HepG2 (cell line): ENCODE measurements at regions of chr19 and their contacts with region 1.

Region 1: GRCh38 chr19:30669329-30670010 is 297.3 kb downstream of the ZNF536 start:
- DNase-seq: peak; percentile 30
- ATAC-seq: peak; percentile 63
- H3K4me3 ChIP-seq: no peak overlapping the region
- H3K27ac ChIP-seq: no peak overlapping the region
- H3K4me1 ChIP-seq: peaks cover 15% of the 10 kb centered on the region
- H3K27me3 ChIP-seq: peaks cover 0 to 3% of the 10 kb centered on the region in 2 experiments; a peak in 1 of 5 replicates
- CTCF ChIP-seq: peak; percentile 80
- EP300 ChIP-seq: no peak
- POLR2A ChIP-seq: no peak
- RAD21 ChIP-seq: peak; percentile 31; the same call in 1 of the 2 replicates

Region 2: DNA sequence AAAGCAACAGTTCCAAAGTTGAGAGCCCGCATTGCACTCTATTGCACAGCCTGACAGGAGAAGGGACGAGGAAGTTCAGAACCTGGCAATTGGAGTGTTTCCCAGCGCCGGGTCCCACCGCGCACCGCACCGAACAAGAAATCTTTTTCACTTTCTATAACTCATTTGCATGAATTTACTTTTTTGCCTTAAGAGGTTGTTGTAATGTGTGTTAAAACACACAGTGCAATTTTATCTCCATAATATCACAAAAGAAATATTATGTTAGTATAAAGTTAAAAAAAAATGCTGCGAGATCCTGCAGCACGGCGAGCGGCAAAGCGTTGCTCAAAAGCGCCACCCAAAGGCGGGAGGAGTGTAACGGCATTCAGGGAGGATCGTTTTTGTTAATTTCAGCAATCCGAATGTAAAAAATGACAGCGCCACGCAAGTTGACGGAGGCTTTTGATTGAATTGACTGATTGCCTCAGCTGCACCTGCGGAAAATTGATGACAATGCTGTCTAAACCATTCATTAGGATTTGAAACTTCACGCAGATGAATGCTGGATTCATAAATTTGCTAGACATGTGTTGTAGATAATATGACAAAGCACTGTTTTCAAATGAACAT is 1372.3 kb after region 1 on chr19:
- CTCF ChIA-PET with region 1: no interaction called
- POLR2A ChIA-PET with region 1: no interaction called
- in situ Hi-C with region 1: loop called (anchors 10 kb)
- intact Hi-C with region 1: no loop called
- DNase-seq: peak; percentile 16
- ATAC-seq: no peak
- H3K4me3 ChIP-seq: no peak overlapping the region
- H3K27ac ChIP-seq: no peak overlapping the region
- H3K4me1 ChIP-seq: no peaks in the 10 kb centered on the region
- H3K27me3 ChIP-seq: no peaks in the 10 kb centered on the region; a peak in 1 of 5 replicates
- CTCF ChIP-seq: peak; percentile 76
- EP300 ChIP-seq: no peak
- POLR2A ChIP-seq: no peak
- RAD21 ChIP-seq: no peak